BJ (cell line): ENCODE measurements at regions of chr20 and their contacts with region 1.

Region 1: GRCh38 chr20:667391-667964 is 8.1 kb downstream of the SCRT2 start:
- DNase-seq: no peak
- H3K4me3 ChIP-seq: no peak overlapping the region
- H3K27me3 ChIP-seq: peaks cover 32% of the 10 kb centered on the region
- CTCF ChIP-seq: peak; percentile 94

Region 2: DNA sequence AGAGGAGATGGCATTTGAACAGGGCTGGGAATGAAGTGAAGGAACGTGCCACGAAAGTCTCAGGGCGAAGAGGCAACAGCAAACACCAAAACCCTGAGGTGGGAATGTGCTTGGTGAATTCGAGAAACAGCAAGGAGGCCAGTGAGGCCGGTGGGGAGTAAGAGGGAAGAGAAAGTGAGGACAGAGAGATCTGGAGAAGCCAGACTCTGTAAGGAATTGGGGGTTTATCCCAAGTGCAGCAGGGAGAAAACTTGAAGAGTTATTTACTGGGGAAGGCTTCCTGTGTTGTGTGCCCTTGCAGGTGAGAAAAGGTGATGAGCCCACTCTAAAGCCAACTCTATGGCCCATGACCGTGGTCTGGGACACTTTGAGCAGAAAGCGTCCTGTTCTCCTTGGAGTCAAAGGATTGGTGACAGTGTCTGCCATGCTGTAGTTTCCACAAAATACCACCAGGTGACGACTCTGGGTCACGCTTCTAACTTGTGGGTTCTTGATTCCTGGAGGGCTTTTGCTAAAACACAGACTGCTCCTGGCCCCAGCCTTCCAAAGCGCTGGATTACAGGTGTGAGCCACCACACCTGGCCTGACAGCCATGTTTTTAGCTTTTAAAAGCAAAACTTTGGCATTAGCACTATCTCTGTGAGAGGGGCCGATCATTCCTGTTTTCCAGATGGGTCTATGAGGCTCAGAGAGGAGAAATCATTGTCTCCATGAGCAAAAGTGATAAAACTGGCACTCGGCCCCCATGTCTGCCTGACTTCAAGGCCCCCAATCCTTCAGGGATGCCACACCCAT is 105.8 kb before region 1 on chr20:
- CTCF ChIA-PET with region 1: interaction called, 34 read pairs
- POLR2A ChIA-PET with region 1: no interaction called
- DNase-seq: no peak
- H3K4me3 ChIP-seq: no peak overlapping the region
- H3K27me3 ChIP-seq: peaks cover 6% of the 10 kb centered on the region; the same call in 1 of the 2 replicates
- CTCF ChIP-seq: peak; percentile 97

Region 3: DNA sequence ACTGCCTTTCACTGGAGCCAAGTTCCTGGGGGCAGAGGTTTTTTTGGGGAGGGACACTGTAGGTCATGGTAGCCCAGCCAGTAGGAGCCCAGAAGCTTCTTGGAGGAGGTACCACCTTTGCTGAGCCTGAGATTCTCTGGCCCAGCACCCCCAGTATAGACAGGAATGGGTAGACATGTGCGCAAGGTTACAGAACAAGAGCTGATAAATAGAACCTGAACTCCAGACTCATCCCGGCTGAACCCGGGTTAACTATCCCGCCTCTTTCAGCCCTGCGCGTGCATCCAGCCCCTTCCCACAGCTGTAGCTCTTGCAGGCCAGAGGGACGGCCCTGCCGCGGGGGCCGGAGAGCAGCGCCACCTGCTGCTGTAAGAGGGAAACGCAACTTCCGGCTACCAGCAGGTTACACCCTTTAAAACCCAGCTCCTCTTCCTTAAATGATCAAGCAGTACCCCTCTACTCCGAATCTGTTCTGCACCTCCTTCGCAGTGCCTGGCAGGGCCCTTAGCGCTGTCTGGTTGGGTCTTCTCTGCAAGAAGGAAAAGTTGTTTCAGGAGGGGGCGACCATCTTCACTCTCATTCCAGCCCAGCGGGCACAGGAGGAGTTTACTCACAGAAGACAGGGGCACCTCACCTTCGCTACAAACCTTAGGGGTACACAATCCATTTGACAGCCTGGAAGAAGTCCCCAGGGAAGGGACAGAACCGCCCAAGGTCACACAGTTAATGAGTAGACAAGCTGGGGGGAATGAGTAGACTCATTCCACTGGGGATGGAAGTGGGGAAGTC is 22.0 kb before region 1 on chr20:
- CTCF ChIA-PET with region 1: interaction called, 49 read pairs
- POLR2A ChIA-PET with region 1: no interaction called
- DNase-seq: no peak
- H3K4me3 ChIP-seq: no peak overlapping the region
- H3K27me3 ChIP-seq: no peaks in the 10 kb centered on the region
- CTCF ChIP-seq: peak; percentile 96

Region 4: GRCh38 chr20:653110-653589 is 14.3 kb before region 1 on chr20 and contains the start of gene SRXN1:
- CTCF ChIA-PET with region 1: interaction called, 49 read pairs
- POLR2A ChIA-PET with region 1: no interaction called
- DNase-seq: peak; percentile 36
- H3K4me3 ChIP-seq: peak within 1 kb of the TSS; percentile 69
- H3K27me3 ChIP-seq: no peaks in the 10 kb centered on the region
- CTCF ChIP-seq: peak; percentile 38
- polyA plus RNA-seq, gene SRXN1: 50.9 and 54.8 TPM in 2 replicates

Region 5: DNA sequence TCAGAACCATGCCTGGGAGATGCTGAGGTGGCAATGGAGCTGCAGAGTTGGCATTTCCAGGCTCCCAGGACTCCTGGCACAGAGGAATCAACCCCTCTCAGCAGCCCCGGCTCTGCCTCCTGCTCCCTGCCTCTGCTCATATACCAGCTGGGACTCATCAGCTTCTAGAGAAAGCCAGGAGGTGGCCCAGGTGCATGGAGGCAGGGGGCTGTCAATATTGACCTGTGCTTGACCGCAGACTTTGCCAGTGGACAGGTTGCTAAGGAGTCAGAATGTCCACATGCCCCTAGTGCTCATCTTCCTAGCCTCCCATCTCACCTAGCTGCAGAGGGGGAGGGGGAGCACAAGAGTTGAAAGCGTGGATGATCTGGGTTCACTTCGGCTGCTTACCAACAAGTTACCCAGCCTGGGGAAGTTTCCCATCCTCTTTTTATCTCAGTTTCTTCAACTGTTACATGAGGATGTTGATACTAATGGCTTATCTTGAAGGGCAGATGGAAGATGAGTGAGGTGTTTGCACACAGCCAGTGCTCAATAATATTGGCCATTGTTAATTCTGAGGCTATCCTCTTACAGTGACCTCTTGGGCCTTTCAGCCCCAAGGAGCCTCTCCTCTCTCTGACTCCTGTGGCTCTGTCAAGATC is 17.3 kb after region 1 on chr20:
- CTCF ChIA-PET with region 1: interaction called, 27 read pairs
- POLR2A ChIA-PET with region 1: no interaction called
- DNase-seq: no peak
- H3K4me3 ChIP-seq: no peak overlapping the region
- H3K27me3 ChIP-seq: peaks cover 8% of the 10 kb centered on the region
- CTCF ChIP-seq: no peak